HepG2 (cell line): ENCODE measurements at regions of chr4 and their contacts with region 1.

Region 1: GRCh38 chr4:39134683-39135319 is 47.5 kb upstream of the WDR19 start:
- DNase-seq: no peak
- ATAC-seq: peak; percentile 20
- H3K4me3 ChIP-seq: peak overlapping the region in 2 of 3 experiments; percentile 1 to 20; a peak in 2 of 6 replicates
- H3K27ac ChIP-seq: no peak overlapping the region
- H3K4me1 ChIP-seq: peaks cover 11% of the 10 kb centered on the region
- H3K27me3 ChIP-seq: no peaks in the 10 kb centered on the region
- CTCF ChIP-seq: no peak
- EP300 ChIP-seq: no peak
- POLR2A ChIP-seq: no peak
- RAD21 ChIP-seq: no peak

Region 2: GRCh38 chr4:37936889-37937498 is 1197.8 kb before region 1 on chr4:
- CTCF ChIA-PET with region 1: no interaction called
- POLR2A ChIA-PET with region 1: no interaction called
- in situ Hi-C with region 1: no loop called
- intact Hi-C with region 1: no loop called
- DNase-seq: no peak
- ATAC-seq: peak; percentile 40; the same call in 2 of the 3 replicates
- H3K4me3 ChIP-seq: no peak overlapping the region
- H3K27ac ChIP-seq: no peak overlapping the region
- H3K4me1 ChIP-seq: no peaks in the 10 kb centered on the region
- H3K27me3 ChIP-seq: no peaks in the 10 kb centered on the region; a peak in 1 of 5 replicates
- CTCF ChIP-seq: peak; percentile 61
- EP300 ChIP-seq: no peak
- POLR2A ChIP-seq: no peak
- RAD21 ChIP-seq: no peak

Region 3: GRCh38 chr4:40576631-40577480 is 1442.1 kb after region 1 on chr4:
- CTCF ChIA-PET with region 1: no interaction called
- POLR2A ChIA-PET with region 1: no interaction called
- in situ Hi-C with region 1: no loop called
- intact Hi-C with region 1: loop called (anchors 5 kb)
- DNase-seq: peak; percentile 98
- ATAC-seq: peak; percentile 98
- H3K4me3 ChIP-seq: peak overlapping the region; percentile 1 to 57 (median 31); a peak in 5 of 6 replicates
- H3K27ac ChIP-seq: peak overlapping the region; percentile 89
- H3K4me1 ChIP-seq: peaks cover 30% of the 10 kb centered on the region
- H3K27me3 ChIP-seq: no peaks in the 10 kb centered on the region
- CTCF ChIP-seq: no peak
- EP300 ChIP-seq: peak in 1 of 2 experiments; percentile 51; a peak in 2 of 4 replicates
- POLR2A ChIP-seq: peak; percentile 50 to 57; a peak in 3 of 4 replicates
- RAD21 ChIP-seq: no peak